ENCODE measurements at regions of chr6 and their contacts with region 1.

Region 1: GRCh38 chr6:87472525-87473418 is at the start of gene SLC35A1:
- DNase-seq: peak; percentile 96
- H3K4me3 ChIP-seq: peak within 1 kb of the TSS; percentile 80 to 92 (median 86)
- H3K27ac ChIP-seq: peak within 1 kb of the TSS; percentile 86 to 95 (median 91)
- H3K4me1 ChIP-seq: peaks cover 13 to 17% (median 15%) of the 10 kb centered on the region in 4 donors
- H3K27me3 ChIP-seq: no peaks in the 10 kb centered on the region
- CTCF ChIP-seq: peak; percentile 11 to 40 (median 20)
- EP300 ChIP-seq: no peak
- POLR2A ChIP-seq: no peak
- total RNA-seq, gene SLC35A1: 11.8 to 15.1 (median 14.3) TPM

Region 2: DNA sequence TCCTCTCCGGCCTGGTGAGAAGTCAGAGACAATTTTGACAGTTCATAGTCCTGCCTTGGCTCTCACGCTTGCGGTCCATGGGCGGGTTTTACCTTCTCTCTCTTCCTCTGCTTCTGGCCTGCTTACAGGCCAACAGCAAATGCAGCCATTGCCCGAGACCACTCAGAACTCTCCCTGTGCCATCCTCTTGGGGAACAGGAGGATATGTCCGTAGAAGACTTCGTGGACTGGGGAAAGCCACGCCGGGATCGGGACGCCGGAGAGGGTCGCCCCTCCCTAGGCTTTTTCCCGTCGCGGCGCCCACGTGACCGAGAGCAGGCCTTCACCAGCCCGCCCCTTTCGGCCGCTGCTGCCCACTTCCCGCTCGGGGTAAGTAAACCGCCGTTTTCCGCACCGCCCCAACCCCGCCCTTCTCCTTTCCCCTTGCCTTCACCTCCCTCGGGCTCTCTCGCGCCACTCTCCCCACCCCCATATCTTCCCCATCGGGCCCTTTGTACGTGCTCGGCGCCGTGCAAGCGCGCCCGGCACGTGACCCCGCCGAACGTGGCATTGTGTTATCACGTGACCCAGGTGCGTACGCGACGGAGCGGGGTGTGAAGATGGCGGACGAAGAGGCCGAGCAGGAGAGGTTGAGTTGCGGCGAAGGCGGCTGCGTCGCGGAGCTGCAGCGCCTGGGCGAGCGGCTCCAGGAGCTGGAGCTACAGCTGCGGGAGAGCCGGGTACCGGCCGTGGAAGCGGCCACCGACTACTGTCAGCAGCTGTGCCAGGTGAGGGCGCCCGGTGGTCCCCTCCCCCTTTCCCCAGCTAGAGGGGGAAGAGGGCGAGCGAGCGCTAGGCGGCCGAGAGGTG is 317.6 kb before region 1 on chr6 and contains the start of gene ZNF292:
- intact Hi-C with region 1: loop called (anchors 10 kb)
- DNase-seq: peak; percentile 99
- H3K4me3 ChIP-seq: peak within 1 kb of the TSS; percentile 86 to 100 (median 92)
- H3K27ac ChIP-seq: peak within 1 kb of the TSS; percentile 93 to 99 (median 94)
- H3K4me1 ChIP-seq: peaks cover 30 to 77% (median 68%) of the 10 kb centered on the region in 4 donors
- H3K27me3 ChIP-seq: no peaks in the 10 kb centered on the region
- CTCF ChIP-seq: no peak
- EP300 ChIP-seq: no peak
- POLR2A ChIP-seq: peak; percentile 43
- total RNA-seq, gene ZNF292: 28.3 to 44.9 (median 32.2) TPM

Region 3: DNA sequence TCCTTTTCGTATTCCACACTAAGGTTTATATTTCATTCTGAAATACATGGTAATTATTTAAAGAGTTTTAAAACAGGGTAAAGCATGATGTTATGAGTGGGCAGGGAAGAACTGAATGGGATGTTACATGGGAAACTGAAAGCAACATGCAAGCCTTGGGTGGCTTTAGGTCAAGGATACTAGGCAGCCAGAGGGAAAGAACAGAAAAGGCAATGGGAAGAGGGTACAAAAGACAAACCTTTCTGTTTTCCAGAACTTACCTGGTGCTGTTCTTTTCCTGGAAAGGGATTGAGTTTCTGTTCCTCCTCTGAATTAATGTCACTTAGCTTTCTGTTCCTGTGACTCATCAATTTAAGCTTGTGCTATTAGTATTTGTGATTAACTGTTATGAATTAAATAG is 221.5 kb before region 1 on chr6:
- intact Hi-C with region 1: no loop called
- DNase-seq: no peak
- H3K4me3 ChIP-seq: no peak overlapping the region
- H3K27ac ChIP-seq: no peak overlapping the region
- H3K4me1 ChIP-seq: no peaks in the 10 kb centered on the region
- H3K27me3 ChIP-seq: no peaks in the 10 kb centered on the region
- CTCF ChIP-seq: no peak
- EP300 ChIP-seq: no peak
- POLR2A ChIP-seq: no peak

Region 4: DNA sequence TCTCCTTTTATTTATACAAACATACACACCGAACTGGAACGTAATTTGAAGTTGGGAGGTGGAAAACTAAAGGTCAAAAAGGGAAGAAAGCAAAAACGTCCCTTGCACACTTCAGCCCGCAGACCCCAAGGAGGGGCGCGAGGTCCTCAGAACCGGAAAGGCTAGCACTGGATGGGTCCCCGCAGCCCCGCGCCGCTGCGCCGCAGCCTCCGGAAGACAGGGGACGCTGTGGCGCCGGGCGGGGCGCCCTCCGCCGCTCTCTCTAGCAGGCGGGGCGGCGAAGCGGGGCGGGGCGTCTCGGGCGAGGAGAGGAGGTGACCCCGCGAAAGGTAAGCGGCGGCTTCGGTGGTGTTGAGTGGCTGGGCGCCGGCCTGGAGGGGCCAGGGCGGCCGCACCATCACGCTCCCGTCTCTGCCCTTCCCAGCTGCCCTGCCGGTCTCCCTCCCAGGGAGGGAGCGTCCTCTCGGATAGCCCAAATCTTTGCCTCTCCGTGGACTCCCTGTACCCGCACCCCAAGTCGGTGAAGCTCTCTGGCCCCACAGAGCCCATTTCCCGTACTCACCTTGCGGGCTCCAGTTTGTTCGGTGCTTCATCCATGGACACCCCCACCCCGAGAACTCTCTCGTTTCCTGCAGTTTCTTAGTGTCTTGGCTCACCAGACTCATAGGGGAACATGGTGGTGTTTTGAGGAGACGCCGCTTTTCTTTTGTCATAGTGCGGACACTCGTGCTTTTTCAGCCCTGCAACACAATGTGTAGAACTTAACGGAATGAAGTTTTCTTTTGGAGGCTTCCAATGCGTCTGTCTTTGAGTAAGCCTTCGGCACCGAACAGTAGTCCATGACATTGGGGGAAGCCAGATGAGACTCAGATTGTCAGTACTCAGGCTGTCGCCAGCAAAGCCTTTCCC is 150.2 kb before region 1 on chr6 and contains the start of gene SMIM8:
- intact Hi-C with region 1: loop called (anchors 2 kb)
- DNase-seq: no peak
- H3K4me3 ChIP-seq: peak within 1 kb of the TSS; percentile 75 to 86 (median 83)
- H3K27ac ChIP-seq: peak within 1 kb of the TSS; percentile 71 to 82 (median 76)
- H3K4me1 ChIP-seq: peaks cover 6 to 10% (median 8%) of the 10 kb centered on the region in 4 donors
- H3K27me3 ChIP-seq: no peaks in the 10 kb centered on the region
- CTCF ChIP-seq: peak; percentile 97 to 100 (median 98)
- EP300 ChIP-seq: no peak
- POLR2A ChIP-seq: no peak
- total RNA-seq, gene SMIM8: 5.3 to 12.0 (median 7.5) TPM

Region 5: DNA sequence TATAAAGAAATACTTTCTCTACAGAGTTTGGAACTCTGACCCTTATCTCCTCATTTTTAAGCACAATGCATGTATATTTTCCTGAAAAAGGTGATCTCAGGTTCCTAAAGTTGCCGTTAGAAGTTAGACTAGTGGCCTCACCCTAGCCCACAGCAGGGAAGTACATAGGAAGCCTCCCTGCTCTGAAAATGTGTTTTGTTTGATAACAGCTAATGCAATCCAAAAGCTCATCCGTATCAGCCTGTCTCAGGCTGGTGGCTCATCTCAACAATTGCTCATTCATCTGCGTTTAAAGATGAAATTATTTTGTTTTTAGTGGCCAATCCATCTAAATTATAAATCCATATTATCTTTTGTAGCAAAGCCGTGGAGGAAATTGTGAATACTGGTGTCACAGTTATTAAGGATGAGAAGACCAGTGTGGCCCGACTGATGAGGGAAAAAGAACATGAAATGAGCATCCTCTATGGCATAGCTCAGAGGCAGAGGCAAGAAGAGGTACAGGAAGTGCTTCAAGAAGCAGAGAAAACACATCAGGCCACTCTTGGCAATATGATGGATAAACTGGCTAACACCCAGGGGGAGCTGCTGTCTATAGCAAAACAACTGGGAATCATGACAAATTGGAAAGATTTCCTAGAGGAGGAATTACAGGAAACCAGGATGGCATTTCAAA is 108.0 kb before region 1 on chr6:
- intact Hi-C with region 1: no loop called
- DNase-seq: no peak
- H3K4me3 ChIP-seq: no peak overlapping the region
- H3K27ac ChIP-seq: no peak overlapping the region
- H3K4me1 ChIP-seq: no peaks in the 10 kb centered on the region
- H3K27me3 ChIP-seq: no peaks in the 10 kb centered on the region
- CTCF ChIP-seq: no peak
- EP300 ChIP-seq: no peak
- POLR2A ChIP-seq: no peak

Region 6: GRCh38 chr6:87393022-87393622 is 79.7 kb before region 1 on chr6:
- intact Hi-C with region 1: loop called (anchors 5 kb)
- DNase-seq: no peak
- H3K4me3 ChIP-seq: no peak overlapping the region
- H3K27ac ChIP-seq: no peak overlapping the region
- H3K4me1 ChIP-seq: no peaks in the 10 kb centered on the region
- H3K27me3 ChIP-seq: no peaks in the 10 kb centered on the region
- CTCF ChIP-seq: peak; percentile 68 to 81 (median 75)
- EP300 ChIP-seq: no peak
- POLR2A ChIP-seq: no peak

Region 7: DNA sequence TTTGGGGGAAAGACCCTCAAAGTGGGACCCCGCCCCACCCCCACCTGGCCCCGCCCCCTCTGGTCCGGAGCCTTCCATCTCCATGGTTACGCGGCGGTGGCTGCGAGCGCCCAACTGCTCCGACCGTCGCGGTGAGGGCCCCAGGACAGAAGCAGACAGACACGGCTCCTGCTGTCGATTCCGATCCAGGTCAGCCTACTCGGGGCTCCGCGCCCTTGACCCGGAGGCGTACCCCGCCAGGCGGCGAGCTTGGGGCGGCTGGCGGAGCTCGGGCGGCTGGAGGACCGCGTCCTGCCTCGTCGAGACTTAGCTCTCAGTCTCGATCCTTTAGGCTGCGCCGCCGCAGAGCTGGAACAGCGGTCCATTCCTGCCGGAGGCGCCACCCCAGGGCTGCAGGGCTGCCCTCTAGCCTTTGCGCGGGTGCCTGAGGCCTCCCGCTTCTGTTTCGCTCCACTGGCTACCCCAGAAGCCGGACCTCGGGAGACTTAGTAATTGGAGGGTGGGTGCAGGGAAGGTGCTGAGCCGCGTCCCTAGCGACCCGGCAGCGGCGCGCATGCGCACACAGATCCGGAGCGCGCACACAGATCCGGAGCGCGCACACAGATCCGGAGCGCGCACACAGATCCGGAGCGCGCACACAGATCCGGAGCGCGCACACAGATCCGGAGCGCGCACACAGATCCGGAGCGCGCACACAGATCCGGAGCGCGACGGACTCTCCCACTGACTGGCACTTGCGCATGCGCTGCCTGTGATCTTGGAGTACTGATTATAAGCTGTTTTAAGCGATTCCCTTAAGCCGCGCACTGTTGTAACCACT is 64.7 kb before region 1 on chr6 and contains the start of gene CFAP206:
- intact Hi-C with region 1: loop called (anchors 5 kb)
- DNase-seq: no peak
- H3K4me3 ChIP-seq: peak within 1 kb of the TSS; percentile 72 to 89 (median 84)
- H3K27ac ChIP-seq: peak within 1 kb of the TSS; percentile 73 to 87 (median 82)
- H3K4me1 ChIP-seq: peaks cover 4 to 11% (median 7%) of the 10 kb centered on the region in 4 donors
- H3K27me3 ChIP-seq: no peaks in the 10 kb centered on the region
- CTCF ChIP-seq: no peak
- EP300 ChIP-seq: no peak
- POLR2A ChIP-seq: no peak
- total RNA-seq, gene CFAP206: 0.23 to 0.26 TPM in 2 of 4 donors, not detected in the others

Region 8: DNA sequence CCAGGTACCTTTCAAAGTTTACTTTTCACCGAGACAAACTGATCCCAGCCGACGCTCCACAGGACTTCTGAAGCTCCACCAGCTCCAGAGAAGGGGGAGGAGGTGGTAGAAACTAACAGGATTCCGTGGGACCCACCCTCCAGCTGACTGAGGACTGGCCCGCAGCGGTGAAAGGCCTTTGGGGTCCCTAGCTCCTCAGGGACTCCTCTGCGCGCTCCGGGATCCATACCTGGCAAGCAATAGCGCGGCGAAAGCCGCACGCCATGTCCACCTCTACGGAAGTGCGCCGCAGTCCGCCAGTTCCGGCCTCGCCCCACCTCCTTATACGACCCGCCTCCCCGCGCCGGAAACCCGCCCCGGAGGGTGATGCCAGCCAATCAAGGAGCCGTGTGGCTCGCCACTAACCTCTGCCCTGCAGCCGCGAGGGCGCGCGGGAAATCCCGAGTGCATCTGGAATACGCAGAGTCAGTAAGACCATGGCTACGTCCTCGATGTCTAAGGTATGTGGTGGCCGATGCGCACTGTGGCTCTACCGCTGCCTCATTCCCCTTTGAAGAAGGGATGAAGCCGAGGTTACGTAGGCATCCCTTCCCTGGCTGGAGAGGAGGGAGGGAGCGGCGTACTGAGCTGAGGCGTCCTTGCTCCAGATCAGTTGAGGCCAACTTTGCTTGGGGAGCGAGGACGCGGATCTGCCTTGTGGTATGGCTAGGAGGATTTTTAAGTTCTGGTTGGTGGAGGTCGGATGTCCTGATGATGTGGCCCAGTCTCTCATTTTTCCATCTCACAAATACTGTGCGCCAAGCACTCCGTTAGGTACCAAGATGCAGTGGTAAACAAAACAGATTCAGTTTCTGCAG is 117.1 kb after region 1 on chr6 and contains the starts of genes ORC3 and RARS2:
- intact Hi-C with region 1: loop called (anchors 10 kb)
- DNase-seq: peak; percentile 99
- H3K4me3 ChIP-seq: peak within 1 kb of the TSS; percentile 66 to 86 (median 78)
- H3K27ac ChIP-seq: peak within 1 kb of the TSS; percentile 76 to 89 (median 86)
- H3K4me1 ChIP-seq: peaks cover 29 to 67% (median 51%) of the 10 kb centered on the region in 4 donors
- H3K27me3 ChIP-seq: no peaks in the 10 kb centered on the region
- CTCF ChIP-seq: no peak
- EP300 ChIP-seq: no peak
- POLR2A ChIP-seq: peak; percentile 58
- total RNA-seq, gene ORC3: 9.9 to 18.7 (median 12.6) TPM
- total RNA-seq, gene RARS2: 14.1 to 19.9 (median 17.6) TPM

Measured in esophagus muscularis mucosa (tissue), 4 donors.